GM23248 (cell line): ENCODE measurements at regions of chr10 and their contacts with region 1.

Region 1: DNA sequence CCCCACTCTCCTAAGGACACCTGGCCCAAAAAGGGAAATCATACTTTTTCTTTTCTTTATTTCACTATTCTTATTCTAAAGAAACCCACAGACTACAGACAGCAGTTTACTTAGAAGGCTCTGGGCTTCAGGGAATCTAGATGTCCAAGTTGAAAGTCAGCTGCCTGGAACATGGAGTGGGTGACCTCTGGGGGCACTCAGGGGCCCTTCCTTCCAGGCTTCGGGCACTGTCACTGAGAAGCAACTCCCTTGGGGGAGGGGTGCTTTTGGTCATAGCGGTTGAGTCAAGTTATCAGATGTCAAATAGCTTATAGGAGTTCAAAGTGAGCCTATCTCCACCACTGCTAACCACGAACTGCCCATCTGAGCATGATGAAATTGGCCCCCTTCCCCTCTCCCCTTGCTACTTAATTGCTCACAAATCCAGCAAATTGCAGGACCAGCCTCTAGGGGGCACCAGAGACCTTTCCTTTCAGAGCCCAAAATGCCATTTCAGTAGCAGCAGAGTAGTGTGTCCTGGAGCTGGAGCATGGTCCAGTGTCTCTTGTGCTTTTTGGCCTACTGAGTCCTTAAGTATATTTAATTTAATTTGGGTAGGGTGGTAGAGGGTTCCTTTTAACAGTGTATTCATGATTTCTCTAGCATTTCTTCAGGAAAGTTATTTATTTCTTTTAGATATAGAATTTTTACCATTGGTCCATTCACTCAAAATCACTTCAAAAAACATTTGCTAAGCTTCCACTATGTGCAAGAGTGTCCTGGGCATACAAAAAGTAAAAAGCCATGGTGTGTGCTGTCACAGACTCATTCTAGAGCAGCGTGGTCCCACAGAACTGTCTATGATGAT is 463.8 kb downstream of the KCNMA1 start:
- DNase-seq: peak; percentile 77
- H3K4me3 ChIP-seq: no peak overlapping the region
- H3K27ac ChIP-seq: no peak overlapping the region
- H3K4me1 ChIP-seq: peaks cover 3% of the 10 kb centered on the region
- H3K27me3 ChIP-seq: no peaks in the 10 kb centered on the region

Region 2: GRCh38 chr10:77494327-77494726 is 320.5 kb after region 1 on chr10:
- in situ Hi-C with region 1: loop called (anchors 10 kb)
- DNase-seq: peak; percentile 35
- H3K4me3 ChIP-seq: no peak overlapping the region
- H3K27ac ChIP-seq: no peak overlapping the region
- H3K4me1 ChIP-seq: no peaks in the 10 kb centered on the region
- H3K27me3 ChIP-seq: no peaks in the 10 kb centered on the region